AG04450 (cell line): ENCODE measurements at regions of chr20 and their contacts with region 1.

Region 1: GRCh38 chr20:9392892-9393857 is 121.2 kb upstream of the LAMP5 start:
- DNase-seq: no peak
- H3K4me3 ChIP-seq: no peak overlapping the region
- H3K27ac ChIP-seq: no peak overlapping the region
- H3K27me3 ChIP-seq: no peaks in the 10 kb centered on the region
- CTCF ChIP-seq: peak; percentile 92

Region 2: DNA sequence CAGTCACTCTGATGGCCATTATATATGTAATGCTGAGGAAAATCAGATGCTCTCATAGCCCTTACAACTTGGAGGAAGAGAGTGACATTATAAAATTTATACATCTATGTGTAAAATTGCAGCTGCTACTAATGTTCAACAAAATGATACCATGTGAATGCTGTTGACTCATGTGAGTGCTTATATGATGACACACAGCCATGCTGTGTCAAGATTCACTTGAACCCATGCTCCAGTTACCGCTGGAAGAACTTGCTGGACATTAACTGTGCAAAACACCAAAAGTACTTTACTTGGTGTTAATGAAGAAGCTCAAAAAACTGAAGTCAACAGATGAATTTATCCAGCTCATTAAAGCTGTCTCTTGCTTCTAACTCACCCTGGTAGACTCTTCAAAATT is 643.2 kb before region 1 on chr20:
- CTCF ChIA-PET with region 1: interaction called, 34 read pairs
- POLR2A ChIA-PET with region 1: no interaction called
- DNase-seq: no peak
- H3K4me3 ChIP-seq: no peak overlapping the region
- H3K27ac ChIP-seq: no peak overlapping the region
- H3K27me3 ChIP-seq: no peaks in the 10 kb centered on the region
- CTCF ChIP-seq: no peak

Region 3: DNA sequence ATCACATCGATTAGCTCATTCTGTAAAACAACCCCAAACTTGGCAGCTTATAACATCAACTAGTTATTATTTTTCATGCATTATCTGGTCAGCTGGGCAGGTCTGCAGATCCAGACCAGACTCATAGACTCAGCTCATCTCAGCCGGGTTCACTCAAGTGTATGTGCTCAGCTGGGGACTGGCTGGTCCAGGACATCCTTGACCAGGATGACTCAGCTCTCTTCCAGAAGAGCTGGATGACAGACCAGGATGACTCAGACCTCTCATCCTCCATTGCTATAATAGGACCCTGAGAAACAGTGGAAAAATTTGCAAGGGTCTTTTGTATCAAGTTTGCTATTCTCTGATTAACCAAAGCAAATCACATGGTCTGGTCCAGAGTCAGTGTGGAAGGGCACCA is 636.8 kb before region 1 on chr20:
- CTCF ChIA-PET with region 1: interaction called, 38 read pairs
- POLR2A ChIA-PET with region 1: no interaction called
- DNase-seq: peak; percentile 57
- H3K4me3 ChIP-seq: no peak overlapping the region
- H3K27ac ChIP-seq: no peak overlapping the region
- H3K27me3 ChIP-seq: no peaks in the 10 kb centered on the region
- CTCF ChIP-seq: no peak

Region 4: GRCh38 chr20:8790442-8791074 is 602.6 kb before region 1 on chr20:
- CTCF ChIA-PET with region 1: interaction called, 72 read pairs
- POLR2A ChIA-PET with region 1: no interaction called
- DNase-seq: peak; percentile 15
- H3K4me3 ChIP-seq: no peak overlapping the region
- H3K27ac ChIP-seq: no peak overlapping the region
- H3K27me3 ChIP-seq: no peaks in the 10 kb centered on the region
- CTCF ChIP-seq: peak; percentile 100

Region 5: DNA sequence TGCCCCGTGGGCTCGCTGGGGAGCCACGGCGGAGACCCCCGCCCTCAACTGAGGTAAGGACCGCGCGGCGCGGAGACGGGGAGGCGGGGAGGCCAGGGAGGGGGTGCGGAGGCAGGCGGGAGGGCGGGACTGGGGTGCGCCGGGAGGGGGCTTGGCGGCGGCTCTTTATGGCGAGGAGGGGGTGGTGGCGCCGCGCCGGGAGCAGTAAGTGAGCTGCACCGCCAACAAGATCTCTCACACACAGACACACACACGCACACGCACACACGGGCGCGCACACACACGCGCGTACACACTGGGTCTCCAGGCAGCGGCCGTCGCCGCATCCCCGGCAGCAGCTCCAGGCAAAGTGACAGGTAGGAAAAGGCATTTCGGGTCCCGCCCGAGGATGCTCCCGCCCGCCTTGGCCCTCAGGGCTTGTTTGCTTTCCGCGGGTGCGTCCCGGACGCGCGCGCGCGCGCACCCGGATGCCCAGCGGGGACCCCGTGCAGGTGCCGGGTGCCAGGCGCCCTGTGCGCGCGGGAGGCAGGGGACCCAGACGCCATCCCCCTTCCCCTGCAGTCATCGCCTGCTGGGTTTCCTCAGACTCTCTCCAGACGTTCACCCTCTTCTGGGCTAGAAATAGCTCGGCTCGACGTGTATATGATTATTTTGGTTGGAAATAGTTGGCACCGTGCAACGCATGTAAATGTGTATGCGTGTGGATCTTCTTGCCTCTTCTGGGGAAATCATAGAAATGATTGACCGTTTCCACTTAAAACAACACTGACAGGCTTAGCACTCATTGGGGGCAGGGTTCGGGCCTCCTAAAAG is 324.1 kb before region 1 on chr20 and contains the start of gene PLCB4:
- CTCF ChIA-PET with region 1: interaction called, 16 read pairs
- POLR2A ChIA-PET with region 1: no interaction called
- DNase-seq: no peak
- H3K4me3 ChIP-seq: peak within 1 kb of the TSS; percentile 89
- H3K27ac ChIP-seq: peak within 1 kb of the TSS; percentile 25
- H3K27me3 ChIP-seq: no peaks in the 10 kb centered on the region
- CTCF ChIP-seq: no peak
- polyA plus RNA-seq, gene PLCB4: 13.0 and 18.6 TPM in 2 replicates

Region 6: DNA sequence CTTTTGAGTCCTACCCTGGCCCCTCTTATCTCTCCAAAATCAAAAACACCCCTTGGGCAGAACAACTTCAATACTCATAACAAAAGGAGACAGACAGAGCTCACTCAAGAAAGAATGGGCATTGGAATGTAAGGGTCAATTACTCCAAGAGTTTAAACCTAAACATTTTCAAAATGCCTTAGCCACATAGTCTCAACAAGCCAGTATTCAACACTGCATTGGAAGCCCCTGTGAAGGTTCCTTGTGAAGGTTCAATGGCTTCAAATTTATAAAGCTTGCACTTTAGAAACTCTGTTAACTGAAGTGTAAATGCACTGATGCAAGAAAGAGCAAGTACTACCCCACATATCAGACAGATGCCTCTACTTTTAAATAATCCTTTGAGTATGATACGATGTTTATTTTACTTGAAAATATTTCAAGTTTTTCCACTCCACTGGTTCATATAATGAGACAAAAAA is 17.9 kb before region 1 on chr20:
- CTCF ChIA-PET with region 1: interaction called, 11 read pairs
- POLR2A ChIA-PET with region 1: no interaction called
- DNase-seq: peak; percentile 27
- H3K4me3 ChIP-seq: no peak overlapping the region
- H3K27ac ChIP-seq: peak overlapping the region; percentile 74
- H3K27me3 ChIP-seq: no peaks in the 10 kb centered on the region
- CTCF ChIP-seq: no peak